Sigmoid colon (tissue), 7 donors: ENCODE measurements at regions of chr19 and their contacts with region 1.

Region 1: GRCh38 chr19:58326914-58327726 is at the start of gene ZSCAN22:
- DNase-seq: peak; percentile 98
- H3K4me3 ChIP-seq: peak within 1 kb of the TSS; percentile 56 to 88 (median 68)
- H3K27ac ChIP-seq: peak within 1 kb of the TSS; percentile 91 to 97 (median 93)
- H3K4me1 ChIP-seq: peaks cover 0 to 29% (median 24%) of the 10 kb centered on the region in 4 donors
- H3K27me3 ChIP-seq: no peaks in the 10 kb centered on the region
- CTCF ChIP-seq: no peak
- EP300 ChIP-seq: peak in 1 of 4 donors; percentile 17
- POLR2A ChIP-seq: peak; percentile 44 to 51
- total RNA-seq, gene ZSCAN22: 1.4 to 3.6 (median 2.2) TPM

Region 2: DNA sequence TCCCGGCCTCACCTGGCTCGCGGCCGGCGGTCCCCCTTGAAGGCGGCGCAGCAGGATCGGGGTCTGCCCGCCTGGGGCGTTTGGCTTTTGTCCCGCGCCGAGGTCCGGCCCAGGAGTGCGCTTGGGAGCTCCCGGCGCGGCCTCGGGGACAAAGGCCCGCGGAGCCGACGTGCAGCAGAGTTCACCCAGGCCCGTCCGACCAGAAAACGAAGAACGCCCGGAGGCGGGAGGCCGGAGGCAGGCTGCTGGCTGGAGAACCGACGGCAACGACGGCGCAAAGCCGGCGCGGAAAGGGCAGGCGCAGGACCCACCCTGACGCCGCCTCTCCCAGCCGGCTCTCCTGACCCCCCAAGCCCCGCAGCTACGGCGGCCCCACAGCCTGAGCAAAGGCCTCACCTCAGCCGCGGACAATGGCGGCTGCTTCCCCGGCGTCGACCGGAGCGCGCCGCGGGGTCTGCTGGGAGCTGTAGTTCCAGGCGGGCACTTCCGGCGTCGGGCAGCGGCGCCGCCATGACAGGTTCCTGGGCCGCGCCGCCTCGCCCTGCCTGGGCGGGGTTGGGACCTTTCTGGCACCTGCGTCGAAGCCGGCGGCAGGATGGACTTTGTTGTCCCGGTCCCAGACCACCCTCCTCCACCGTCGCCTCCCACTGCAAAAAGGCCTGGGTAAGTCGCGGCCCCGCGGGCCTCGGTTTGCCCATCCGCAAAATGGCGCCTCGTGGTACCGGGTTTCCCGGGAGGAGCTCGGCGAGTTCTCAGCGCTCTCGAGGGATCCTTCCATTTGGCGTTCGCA is 324.5 kb before region 1 on chr19 and contains the start of gene ZNF606:
- intact Hi-C with region 1: no loop called
- DNase-seq: peak; percentile 91
- H3K4me3 ChIP-seq: peak within 1 kb of the TSS; percentile 63 to 99 (median 72)
- H3K27ac ChIP-seq: peak within 1 kb of the TSS; percentile 83 to 96 (median 90)
- H3K4me1 ChIP-seq: peaks cover 0 to 27% (median 21%) of the 10 kb centered on the region in 4 donors
- H3K27me3 ChIP-seq: no peaks in the 10 kb centered on the region
- CTCF ChIP-seq: no peak
- EP300 ChIP-seq: no peak
- POLR2A ChIP-seq: peak; percentile 64 to 70
- total RNA-seq, gene ZNF606: 9.8 to 32.1 (median 19.0) TPM

Region 3: GRCh38 chr19:58117841-58118575 is 209.1 kb before region 1 on chr19:
- intact Hi-C with region 1: no loop called
- DNase-seq: no peak
- H3K4me3 ChIP-seq: no peak overlapping the region
- H3K27ac ChIP-seq: no peak overlapping the region
- H3K4me1 ChIP-seq: no peaks in the 10 kb centered on the region
- H3K27me3 ChIP-seq: peaks cover 5 to 16% (median 8%) of the 10 kb centered on the region in 3 donors
- CTCF ChIP-seq: no peak
- EP300 ChIP-seq: no peak
- POLR2A ChIP-seq: no peak

Region 4: GRCh38 chr19:58182989-58183816 is 143.9 kb before region 1 on chr19 and contains the start of gene ZNF274:
- intact Hi-C with region 1: loop called (anchors 5 kb)
- DNase-seq: peak; percentile 98
- H3K4me3 ChIP-seq: peak within 1 kb of the TSS; percentile 62 to 77 (median 68)
- H3K27ac ChIP-seq: peak within 1 kb of the TSS; percentile 91 to 97 (median 94)
- H3K4me1 ChIP-seq: peaks cover 0 to 9% (median 0%) of the 10 kb centered on the region in 4 donors
- H3K27me3 ChIP-seq: no peaks in the 10 kb centered on the region
- CTCF ChIP-seq: no peak
- EP300 ChIP-seq: no peak
- POLR2A ChIP-seq: peak; percentile 54 to 57
- total RNA-seq, gene ZNF274: 18.3 to 26.7 (median 22.6) TPM

Region 5: GRCh38 chr19:58278157-58279041 is 48.7 kb before region 1 on chr19 and contains the start of gene ZNF8:
- intact Hi-C with region 1: loop called (anchors 2 kb)
- DNase-seq: peak; percentile 98
- H3K4me3 ChIP-seq: peak within 1 kb of the TSS; percentile 76 to 89 (median 86)
- H3K27ac ChIP-seq: peak within 1 kb of the TSS; percentile 88 to 94 (median 90)
- H3K4me1 ChIP-seq: peaks cover 0 to 23% (median 19%) of the 10 kb centered on the region in 4 donors
- H3K27me3 ChIP-seq: no peaks in the 10 kb centered on the region
- CTCF ChIP-seq: no peak
- EP300 ChIP-seq: peak in 1 of 4 donors; percentile 23
- POLR2A ChIP-seq: peak; percentile 45 to 69
- total RNA-seq, gene ZNF8: 4.9 to 8.6 (median 6.5) TPM

Region 6: DNA sequence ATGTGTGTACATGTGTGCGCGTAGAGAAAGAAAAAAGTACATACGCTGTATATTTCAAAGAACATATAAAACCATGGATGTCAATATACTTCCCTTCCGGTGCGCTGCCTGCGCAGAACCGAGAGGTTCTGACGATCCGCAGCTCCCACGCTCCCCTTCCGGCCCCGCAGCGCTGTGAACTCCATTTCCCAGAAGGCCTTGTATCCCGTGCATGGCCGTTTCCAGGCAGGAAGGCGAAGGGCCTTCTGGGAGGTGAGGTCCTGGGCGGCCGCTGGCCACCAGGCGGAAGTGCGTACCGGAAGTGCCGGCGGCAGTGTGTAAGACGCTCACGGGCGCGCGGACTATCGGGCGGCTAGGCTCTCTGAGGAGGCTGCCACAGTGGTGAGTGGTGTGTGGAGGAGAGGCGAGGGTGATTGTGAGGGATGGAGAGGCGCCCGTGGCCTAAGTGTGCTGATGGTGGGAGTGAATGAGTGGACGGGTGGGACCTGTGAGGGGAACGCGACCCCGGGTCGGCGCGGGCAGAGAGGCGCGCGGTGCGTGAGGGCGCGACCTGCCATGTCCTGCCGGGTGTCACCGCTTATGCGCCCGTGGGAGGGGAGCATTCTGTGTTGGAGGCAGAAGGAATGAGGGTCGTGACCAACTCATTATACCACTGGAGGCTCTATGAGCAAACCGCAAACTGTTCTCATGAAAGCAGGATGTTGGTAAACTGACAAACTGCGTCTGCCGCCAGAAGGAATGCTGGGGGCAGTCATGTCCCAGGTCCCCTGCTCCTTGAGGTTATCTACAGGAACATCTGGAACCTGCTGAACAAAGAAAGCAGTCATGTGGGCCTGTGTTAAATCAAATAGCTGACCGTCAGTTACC is 21.8 kb before region 1 on chr19 and contains the start of gene ERVK3-1:
- intact Hi-C with region 1: loop called (anchors 1 kb)
- DNase-seq: peak; percentile 98
- H3K4me3 ChIP-seq: peak within 1 kb of the TSS; percentile 80 to 93 (median 90)
- H3K27ac ChIP-seq: peak within 1 kb of the TSS; percentile 88 to 93 (median 90)
- H3K4me1 ChIP-seq: peaks cover 0 to 17% (median 14%) of the 10 kb centered on the region in 4 donors
- H3K27me3 ChIP-seq: no peaks in the 10 kb centered on the region
- CTCF ChIP-seq: peak in 3 of 4 experiments; percentile 21 to 44 (median 36)
- EP300 ChIP-seq: peak in 1 of 4 donors; percentile 62
- POLR2A ChIP-seq: peak; percentile 83 to 88
- total RNA-seq, gene ERVK3-1: 41.7 to 49.4 (median 44.0) TPM

Region 7: GRCh38 chr19:58362272-58362994 is 35.3 kb after region 1 on chr19 and contains the start of gene ZNF497:
- intact Hi-C with region 1: loop called (anchors 1 kb)
- DNase-seq: peak; percentile 98
- H3K4me3 ChIP-seq: peak within 1 kb of the TSS; percentile 69 to 78 (median 72)
- H3K27ac ChIP-seq: peak within 1 kb of the TSS; percentile 87 to 96 (median 93)
- H3K4me1 ChIP-seq: peaks cover 0 to 9% (median 3%) of the 10 kb centered on the region in 4 donors
- H3K27me3 ChIP-seq: peaks cover 0 to 10% (median 9%) of the 10 kb centered on the region in 3 donors
- CTCF ChIP-seq: peak in 1 of 4 experiments; percentile 8
- EP300 ChIP-seq: peak in 1 of 4 donors; percentile 41
- POLR2A ChIP-seq: peak; percentile 52 to 68
- total RNA-seq, gene ZNF497: 0.28 to 0.54 (median 0.43) TPM

Region 8: GRCh38 chr19:58380722-58381466 is 53.8 kb after region 1 on chr19 and contains the start of gene ZNF837:
- intact Hi-C with region 1: loop called (anchors 1 kb)
- DNase-seq: peak; percentile 100
- H3K4me3 ChIP-seq: peak within 1 kb of the TSS; percentile 75 to 93 (median 88)
- H3K27ac ChIP-seq: peak within 1 kb of the TSS; percentile 92 to 96 (median 96)
- H3K4me1 ChIP-seq: peaks cover 0 to 34% (median 25%) of the 10 kb centered on the region in 4 donors
- H3K27me3 ChIP-seq: no peaks in the 10 kb centered on the region
- CTCF ChIP-seq: no peak
- EP300 ChIP-seq: no peak
- POLR2A ChIP-seq: peak; percentile 78 to 81
- total RNA-seq, gene ZNF837: 0.66 to 2.2 (median 1.5) TPM

Region 9: GRCh38 chr19:58400916-58401839 is 74.1 kb after region 1 on chr19:
- intact Hi-C with region 1: no loop called
- DNase-seq: peak; percentile 100
- H3K4me3 ChIP-seq: peak overlapping the region; percentile 47 to 66 (median 58)
- H3K27ac ChIP-seq: peak overlapping the region; percentile 76 to 82 (median 78)
- H3K4me1 ChIP-seq: peaks cover 0 to 24% (median 21%) of the 10 kb centered on the region in 4 donors
- H3K27me3 ChIP-seq: peaks cover 9 to 20% (median 15%) of the 10 kb centered on the region in 3 donors
- CTCF ChIP-seq: no peak
- EP300 ChIP-seq: no peak
- POLR2A ChIP-seq: peak in 1 of 2 donors; percentile 48